ENCODE measurements at regions of chr15 and their contacts with region 1.

Region 1: GRCh38 chr15:97248376-97248775 is 712.1 kb upstream of the ARRDC4 start:
- DNase-seq: no peak
- H3K4me3 ChIP-seq: no peak overlapping the region
- H3K27ac ChIP-seq: no peak overlapping the region
- H3K4me1 ChIP-seq: no peaks in the 10 kb centered on the region
- H3K27me3 ChIP-seq: no peaks in the 10 kb centered on the region
- CTCF ChIP-seq: no peak

Region 2: DNA sequence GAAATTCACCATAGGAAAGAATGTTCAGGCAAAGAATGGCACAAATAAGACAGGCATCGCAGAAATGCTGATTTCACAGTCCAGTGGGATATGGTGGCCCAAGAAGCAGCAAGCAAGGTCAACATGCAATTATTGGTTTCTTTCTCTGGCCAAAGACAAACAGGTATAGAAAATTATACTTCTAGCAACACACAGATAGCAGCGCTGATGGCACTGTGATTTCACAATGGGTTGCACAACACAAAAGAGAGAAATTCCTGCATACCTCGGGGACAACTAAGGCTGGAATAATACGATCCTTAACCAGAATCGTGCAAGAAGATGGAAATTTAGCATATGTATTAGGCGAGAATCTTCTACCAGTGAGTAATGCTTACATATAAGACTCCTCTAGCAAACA is 994.2 kb before region 1 on chr15:
- CTCF ChIA-PET with region 1: no interaction called
- dilution Hi-C with region 1: no loop called
- in situ Hi-C with region 1: no loop called
- intact Hi-C with region 1: loop called (anchors 10 kb)
- DNase-seq: no peak
- H3K4me3 ChIP-seq: no peak overlapping the region
- H3K27ac ChIP-seq: no peak overlapping the region
- H3K4me1 ChIP-seq: no peaks in the 10 kb centered on the region
- H3K27me3 ChIP-seq: no peaks in the 10 kb centered on the region
- CTCF ChIP-seq: no peak

Region 3: DNA sequence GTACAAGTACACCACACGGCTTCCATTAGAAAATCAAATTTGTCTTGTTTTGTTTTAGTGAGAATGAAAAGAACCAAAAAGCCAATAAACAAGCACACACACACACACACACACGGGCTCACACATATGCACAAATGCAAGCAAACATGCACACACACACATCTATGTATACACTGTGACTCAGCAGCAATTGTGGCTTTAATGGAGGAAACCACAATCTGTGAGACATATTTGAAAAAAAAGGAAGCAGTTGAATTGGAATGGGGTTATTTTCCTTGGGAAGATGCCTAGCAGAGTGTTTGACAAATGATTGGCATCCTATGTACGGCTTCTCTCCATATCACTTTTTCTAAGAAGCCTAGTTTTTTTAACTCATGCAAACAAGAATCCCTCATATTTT is 511.0 kb after region 1 on chr15:
- CTCF ChIA-PET with region 1: no interaction called
- dilution Hi-C with region 1: no loop called
- in situ Hi-C with region 1: no loop called
- intact Hi-C with region 1: loop called (anchors 1 kb)
- DNase-seq: peak; percentile 83
- H3K4me3 ChIP-seq: no peak overlapping the region
- H3K27ac ChIP-seq: no peak overlapping the region
- H3K4me1 ChIP-seq: peaks cover 3% of the 10 kb centered on the region
- H3K27me3 ChIP-seq: no peaks in the 10 kb centered on the region
- CTCF ChIP-seq: no peak

Measured in mammary epithelial cell (primary cell).